GM10248 (cell line): ENCODE measurements at regions of chr5 and their contacts with region 1.

Region 1: DNA sequence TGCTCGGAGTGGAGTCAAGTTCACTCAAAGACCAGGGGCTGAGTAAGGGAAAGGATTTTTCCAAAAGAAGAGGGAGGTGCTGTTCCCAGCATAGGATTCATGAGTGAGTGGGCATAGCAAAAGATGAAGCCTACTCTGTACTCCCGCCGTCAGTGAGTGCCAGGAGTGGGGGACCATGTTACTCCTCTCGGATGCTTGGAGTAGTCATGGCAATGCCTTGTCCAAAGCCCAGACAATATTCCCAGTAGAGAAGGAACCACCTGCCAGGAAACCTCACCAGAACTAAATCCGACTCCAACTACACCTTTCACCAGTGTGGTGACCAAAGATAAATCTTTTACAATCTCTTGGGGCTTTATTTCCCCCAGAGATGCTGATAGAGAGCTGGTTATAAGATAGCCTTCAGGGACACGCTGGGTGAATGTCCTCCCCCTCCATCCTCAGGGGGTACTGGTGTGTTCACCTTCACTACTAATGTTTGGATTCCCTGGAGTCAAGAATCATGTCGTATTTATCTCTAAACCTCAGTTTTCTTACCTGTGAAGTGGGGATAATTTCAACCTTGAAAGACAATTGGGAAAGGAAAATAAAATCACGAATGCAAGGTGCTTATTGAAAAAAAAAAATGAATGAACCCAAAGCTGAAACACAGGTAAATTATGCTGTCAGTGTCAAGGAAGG is 165.2 kb downstream of the NSG2 start:
- DNase-seq: no peak
- CTCF ChIP-seq: no peak

Region 2: GRCh38 chr5:173998531-173998930 is 212.2 kb before region 1 on chr5:
- CTCF ChIA-PET with region 1: no interaction called
- POLR2A ChIA-PET with region 1: no interaction called
- DNase-seq: no peak
- CTCF ChIP-seq: no peak

Region 3: DNA sequence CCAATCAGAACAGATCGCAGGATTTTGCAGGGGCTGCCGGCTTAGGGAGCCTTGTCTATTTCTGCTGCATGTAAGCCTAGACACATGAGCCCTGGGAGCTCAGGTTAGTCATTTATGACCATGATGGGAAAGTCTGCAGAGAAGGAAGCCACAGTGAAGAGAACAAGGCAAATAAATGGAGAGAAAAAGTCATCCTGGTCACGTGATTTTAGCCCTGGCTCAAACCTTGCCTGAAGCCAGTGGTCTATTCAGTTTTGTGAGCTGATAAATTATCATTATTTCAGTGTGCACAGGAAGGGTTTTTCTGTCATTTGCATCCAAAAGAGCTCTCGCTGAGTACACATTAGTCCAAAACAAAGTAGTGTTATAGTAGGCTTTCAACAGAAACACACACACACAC is 16.5 kb after region 1 on chr5:
- CTCF ChIA-PET with region 1: interaction called, 10 read pairs
- POLR2A ChIA-PET with region 1: no interaction called
- DNase-seq: no peak
- CTCF ChIP-seq: no peak